ENCODE measurements at regions of chr21 and their contacts with region 1.

Region 1: DNA sequence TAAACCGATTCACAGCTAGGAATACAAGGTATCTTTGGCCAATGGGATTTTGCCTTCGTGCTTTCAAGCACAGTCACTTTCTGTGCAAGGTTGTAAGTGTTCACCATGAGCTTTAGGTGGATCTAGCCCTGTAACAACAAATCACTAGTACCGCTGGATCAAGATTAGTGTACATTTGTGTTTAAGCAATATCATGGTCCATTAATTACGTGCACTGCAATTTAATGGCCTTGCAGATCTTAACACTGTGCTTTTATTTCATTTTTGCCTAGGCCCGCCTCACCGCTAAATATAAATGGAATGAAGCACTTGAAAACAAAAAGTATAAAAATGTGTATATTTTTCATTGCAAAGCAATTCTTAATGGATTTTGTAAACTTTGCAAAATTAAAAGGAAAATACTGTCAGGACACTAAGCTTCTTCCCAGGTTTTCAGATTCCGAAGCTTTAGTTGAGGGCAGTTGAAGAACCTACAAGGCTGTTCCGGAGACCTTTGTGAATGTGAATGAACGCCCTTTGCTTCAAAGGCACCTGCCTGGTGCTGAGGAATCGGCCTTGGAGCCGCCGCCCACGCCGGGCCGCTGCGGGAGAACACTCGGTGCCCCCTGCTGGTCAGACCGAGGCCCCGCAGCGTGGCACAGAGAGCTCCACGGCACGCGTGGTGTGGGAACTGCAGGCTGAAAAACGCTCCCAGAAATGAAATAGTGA is 460.9 kb downstream of the DSCAM start:
- DNase-seq: no peak
- H3K4me3 ChIP-seq: no peak overlapping the region
- CTCF ChIP-seq: peak; percentile 95

Region 2: GRCh38 chr21:40143822-40144525 is 242.1 kb before region 1 on chr21:
- in situ Hi-C with region 1: loop called (anchors 25 kb)
- DNase-seq: peak; percentile 38
- H3K4me3 ChIP-seq: no peak overlapping the region
- CTCF ChIP-seq: peak; percentile 66

Region 3: GRCh38 chr21:40587736-40588346 is 201.8 kb after region 1 on chr21:
- in situ Hi-C with region 1: no loop called
- DNase-seq: no peak
- H3K4me3 ChIP-seq: no peak overlapping the region
- CTCF ChIP-seq: no peak